Transverse colon (tissue), 4 donors: ENCODE measurements at regions of chr10 and their contacts with region 1.

Region 1: GRCh38 chr10:125485665-125486064 is 197.3 kb downstream of the TEX36 start:
- DNase-seq: no peak
- H3K4me3 ChIP-seq: no peak overlapping the region
- H3K27ac ChIP-seq: no peak overlapping the region
- H3K4me1 ChIP-seq: no peaks in the 10 kb centered on the region
- H3K27me3 ChIP-seq: peaks cover 38% of the 10 kb centered on the region
- CTCF ChIP-seq: no peak
- EP300 ChIP-seq: no peak
- POLR2A ChIP-seq: no peak

Region 2: GRCh38 chr10:125472032-125472607 is 13.5 kb before region 1 on chr10:
- in situ Hi-C with region 1: no loop called
- intact Hi-C with region 1: no loop called
- DNase-seq: peak; percentile 56
- H3K4me3 ChIP-seq: no peak overlapping the region
- H3K27ac ChIP-seq: no peak overlapping the region
- H3K4me1 ChIP-seq: no peaks in the 10 kb centered on the region
- H3K27me3 ChIP-seq: peaks cover 12% of the 10 kb centered on the region
- CTCF ChIP-seq: no peak
- EP300 ChIP-seq: no peak
- POLR2A ChIP-seq: no peak

Region 3: GRCh38 chr10:125521721-125522680 is 36.3 kb after region 1 on chr10:
- in situ Hi-C with region 1: no loop called
- intact Hi-C with region 1: loop called (anchors 2 kb)
- DNase-seq: no peak
- H3K4me3 ChIP-seq: no peak overlapping the region
- H3K27ac ChIP-seq: no peak overlapping the region
- H3K4me1 ChIP-seq: no peaks in the 10 kb centered on the region
- H3K27me3 ChIP-seq: peaks cover 7% of the 10 kb centered on the region
- CTCF ChIP-seq: peak; percentile 28 to 51 (median 45)
- EP300 ChIP-seq: no peak
- POLR2A ChIP-seq: no peak